ENCODE measurements at regions of chr5 and their contacts with region 1.

Region 1: GRCh38 chr5:107263387-107264018 is 407.2 kb downstream of the EFNA5 start:
- DNase-seq: peak; percentile 18
- CTCF ChIP-seq: no peak

Region 2: GRCh38 chr5:107248066-107248695 is 15.3 kb before region 1 on chr5:
- CTCF ChIA-PET with region 1: interaction called, 22 read pairs
- POLR2A ChIA-PET with region 1: no interaction called
- DNase-seq: peak; percentile 32
- CTCF ChIP-seq: peak; percentile 67

Region 3: GRCh38 chr5:107306597-107306996 is 43.1 kb after region 1 on chr5:
- CTCF ChIA-PET with region 1: no interaction called
- POLR2A ChIA-PET with region 1: no interaction called
- DNase-seq: no peak
- CTCF ChIP-seq: no peak

Measured in GM10248 (cell line).